Activated CD4-positive, alpha-beta T cell treated with anti-CD3 and anti-CD28 coated beads for 36 hours (primary cell): ENCODE measurements at regions of chr20 and their contacts with region 1.

Region 1: DNA sequence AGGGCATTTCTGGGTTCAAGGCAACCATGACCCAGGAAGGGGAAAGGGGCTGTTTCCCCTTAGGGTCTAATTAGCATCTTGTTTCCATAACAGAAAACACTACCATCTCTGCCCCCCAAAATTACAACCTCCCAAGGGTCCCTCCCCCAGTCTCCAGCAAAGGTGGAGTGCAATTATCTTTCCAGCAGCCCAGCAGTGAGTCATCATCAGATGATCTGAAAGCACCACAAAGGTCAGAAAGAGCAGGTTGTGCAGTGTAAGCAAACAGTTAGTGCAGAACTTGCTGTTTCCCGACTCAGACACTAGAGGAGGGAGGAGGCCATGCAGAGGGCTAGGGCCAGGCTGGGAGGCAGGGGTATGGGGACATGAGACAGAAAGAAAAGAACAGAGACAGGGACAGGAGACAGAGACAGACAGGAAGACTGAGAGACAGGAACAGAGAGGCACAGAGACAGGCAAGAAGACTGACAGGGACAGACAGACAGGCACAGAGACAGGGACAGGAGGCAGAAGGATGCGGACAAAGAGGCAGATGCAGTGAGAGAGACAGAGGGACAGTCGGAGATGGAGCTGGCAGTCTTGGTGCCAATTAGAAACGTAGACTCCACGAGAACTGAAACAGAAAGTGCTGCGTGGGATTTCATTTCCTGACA is 62.5 kb downstream of the PYGB start:
- DNase-seq: peak; percentile 79
- ATAC-seq: peak; percentile 97
- H3K4me3 Mint-ChIP-seq: peak overlapping the region; percentile 59
- H3K27ac Mint-ChIP-seq: peak overlapping the region; percentile 94
- H3K4me1 Mint-ChIP-seq: peaks cover 35% of the 10 kb centered on the region
- H3K27me3 Mint-ChIP-seq: no peaks in the 10 kb centered on the region

Region 2: GRCh38 chr20:24948939-24949679 is 361.3 kb before region 1 on chr20 and contains the start of gene CST7:
- CTCF ChIA-PET with region 1: no interaction called
- POLR2A ChIA-PET with region 1: no interaction called
- intact Hi-C with region 1: loop called in 1 of 2 experiments (anchors 5 kb)
- DNase-seq: peak; percentile 81
- ATAC-seq: peak; percentile 93
- H3K4me3 Mint-ChIP-seq: peak within 1 kb of the TSS; percentile 59
- H3K27ac Mint-ChIP-seq: peak within 1 kb of the TSS; percentile 94
- H3K4me1 Mint-ChIP-seq: peaks cover 32% of the 10 kb centered on the region
- H3K27me3 Mint-ChIP-seq: peaks cover 2% of the 10 kb centered on the region
- total RNA-seq, gene CST7: 10.7 to 14.0 TPM

Region 3: DNA sequence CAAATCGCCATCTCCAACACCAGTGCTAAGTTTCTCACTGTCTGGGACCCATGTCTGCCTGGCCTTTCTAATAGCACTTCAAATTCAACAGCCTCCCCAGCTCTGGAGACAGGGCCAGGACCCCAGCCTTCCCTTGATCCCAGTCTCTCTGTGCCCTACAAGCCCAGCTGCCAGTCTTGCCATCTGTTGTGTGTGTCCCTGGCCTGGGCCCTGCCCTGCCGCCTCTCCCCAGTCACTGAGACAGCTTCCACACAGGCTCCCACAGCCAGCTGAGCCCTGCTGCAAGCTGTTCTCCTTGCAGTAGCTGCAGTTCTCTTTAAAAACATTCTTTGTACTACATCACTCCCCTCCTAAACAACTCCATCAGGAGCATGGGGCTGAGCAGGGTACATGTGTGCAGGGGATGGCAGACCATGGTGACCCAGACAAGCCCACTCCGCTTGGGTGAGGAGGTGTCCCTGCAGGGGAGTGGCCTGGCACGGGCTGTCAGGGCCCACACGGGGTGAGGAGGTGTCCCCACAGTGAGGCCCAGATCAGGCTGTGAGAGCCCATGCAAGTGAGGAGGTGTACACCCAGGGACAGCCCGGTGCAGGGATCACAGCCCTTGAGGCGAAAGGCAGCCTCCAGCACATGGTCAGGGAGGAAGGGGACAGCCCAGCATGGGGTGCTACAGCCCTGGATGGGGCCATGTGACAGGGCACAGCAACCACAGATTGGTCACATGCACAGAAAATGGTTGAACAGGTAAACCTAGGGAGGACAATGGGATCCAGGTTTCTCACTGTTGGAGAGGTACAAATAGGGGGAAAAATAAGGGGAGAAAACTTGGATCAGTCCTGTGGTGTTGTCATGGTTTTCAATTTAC is 345.1 kb before region 1 on chr20:
- CTCF ChIA-PET with region 1: no interaction called
- POLR2A ChIA-PET with region 1: no interaction called
- intact Hi-C with region 1: no loop called
- DNase-seq: no peak
- ATAC-seq: no peak
- H3K4me3 Mint-ChIP-seq: no peak overlapping the region
- H3K27ac Mint-ChIP-seq: peak overlapping the region; percentile 63
- H3K4me1 Mint-ChIP-seq: peaks cover 13% of the 10 kb centered on the region
- H3K27me3 Mint-ChIP-seq: no peaks in the 10 kb centered on the region

Region 4: DNA sequence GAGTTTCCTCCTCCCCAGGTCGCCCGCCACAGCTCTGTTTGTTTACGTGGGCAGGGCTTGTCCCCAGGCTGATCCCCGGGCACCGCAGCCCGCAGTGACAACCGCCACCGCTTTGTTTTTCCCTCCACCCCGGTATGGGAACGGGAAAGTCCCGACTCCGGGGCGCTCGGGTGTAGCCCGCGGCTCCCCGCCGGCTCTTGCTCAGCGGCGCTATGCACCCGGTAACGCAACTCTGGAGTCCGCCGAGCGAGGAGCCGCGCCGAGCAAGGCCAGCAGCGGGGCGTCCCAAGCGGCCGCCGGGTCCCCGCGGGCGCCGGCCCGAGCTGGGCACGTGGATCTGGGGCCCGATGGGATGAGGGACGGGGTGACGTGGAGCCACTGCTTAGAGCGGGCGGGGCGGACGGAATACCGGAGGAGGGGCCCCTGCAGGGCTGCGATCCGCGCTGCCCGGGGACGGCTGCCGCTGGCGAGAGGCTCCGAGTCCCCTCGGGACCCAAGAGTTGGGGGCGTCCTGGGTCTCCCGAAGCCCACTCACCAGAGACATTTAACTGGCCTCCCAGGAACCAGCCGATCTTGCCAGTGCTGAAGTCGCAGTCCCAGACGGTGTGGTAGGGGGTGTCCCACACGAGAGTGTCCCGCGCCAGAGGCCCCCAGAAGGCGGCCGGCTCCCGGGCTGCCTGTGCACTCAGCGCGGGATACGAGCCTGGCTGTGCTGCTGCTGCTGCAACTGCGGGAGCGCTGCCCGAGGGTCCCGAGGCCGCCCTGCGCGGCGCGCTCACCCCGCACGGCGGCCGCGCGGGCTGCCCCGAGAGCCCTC is 253.0 kb before region 1 on chr20:
- CTCF ChIA-PET with region 1: no interaction called
- POLR2A ChIA-PET with region 1: no interaction called
- intact Hi-C with region 1: loop called in 1 of 2 experiments (anchors 5 kb)
- DNase-seq: peak; percentile 86
- ATAC-seq: peak; percentile 52
- H3K4me3 Mint-ChIP-seq: peak overlapping the region; percentile 74
- H3K27ac Mint-ChIP-seq: peak overlapping the region; percentile 77
- H3K4me1 Mint-ChIP-seq: peaks cover 53% of the 10 kb centered on the region
- H3K27me3 Mint-ChIP-seq: no peaks in the 10 kb centered on the region

Region 5: GRCh38 chr20:25254986-25255680 is 55.3 kb before region 1 on chr20:
- CTCF ChIA-PET with region 1: no interaction called
- POLR2A ChIA-PET with region 1: no interaction called
- intact Hi-C with region 1: no loop called
- DNase-seq: no peak
- ATAC-seq: no peak
- H3K4me3 Mint-ChIP-seq: no peak overlapping the region
- H3K27ac Mint-ChIP-seq: no peak overlapping the region
- H3K4me1 Mint-ChIP-seq: peaks cover 62% of the 10 kb centered on the region
- H3K27me3 Mint-ChIP-seq: no peaks in the 10 kb centered on the region

Region 6: GRCh38 chr20:25623736-25624499 is 313.5 kb after region 1 on chr20 and contains the start of gene NANP:
- CTCF ChIA-PET with region 1: no interaction called
- POLR2A ChIA-PET with region 1: no interaction called
- intact Hi-C with region 1: loop called in 1 of 2 experiments (anchors 10 kb)
- DNase-seq: peak; percentile 95
- ATAC-seq: peak; percentile 87
- H3K4me3 Mint-ChIP-seq: peak within 1 kb of the TSS; percentile 80
- H3K27ac Mint-ChIP-seq: peak within 1 kb of the TSS; percentile 95
- H3K4me1 Mint-ChIP-seq: peaks cover 21% of the 10 kb centered on the region
- H3K27me3 Mint-ChIP-seq: no peaks in the 10 kb centered on the region
- total RNA-seq, gene NANP: 6.1 to 8.3 TPM